GM12878 (cell line): ENCODE measurements at regions of chr2 and their contacts with region 1.

Region 1: DNA sequence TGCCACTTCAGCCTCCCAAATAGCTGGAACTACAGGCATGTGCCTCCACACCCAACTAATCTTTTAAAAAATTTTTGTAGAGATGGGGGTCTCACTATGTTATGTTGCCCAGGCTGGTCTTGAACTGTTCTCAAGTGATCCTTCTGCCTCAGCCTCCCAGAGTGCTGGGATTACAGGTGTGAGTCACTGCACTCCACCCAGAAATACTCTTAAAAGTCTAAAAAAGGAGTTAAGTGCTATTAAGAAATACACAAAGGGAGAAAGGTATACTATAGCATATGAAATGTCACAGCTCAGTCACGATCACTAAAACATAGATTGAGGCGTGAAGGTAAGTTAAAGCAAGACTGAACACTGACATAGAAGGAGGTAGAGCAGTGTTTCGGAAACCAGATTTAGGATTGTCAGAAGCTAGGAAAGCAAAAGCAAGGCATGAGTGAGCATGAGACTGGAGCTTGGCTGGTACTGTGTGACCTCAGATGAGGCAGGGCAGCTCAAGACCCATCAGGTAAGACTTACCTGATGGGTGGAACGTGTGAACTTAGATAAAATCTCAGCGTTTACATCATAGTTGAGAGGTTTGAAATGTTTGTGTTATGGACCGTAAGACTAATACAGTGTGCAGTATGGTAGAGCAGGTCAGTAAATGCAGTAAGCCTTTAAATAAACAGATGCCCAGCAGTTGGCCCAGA is 9.2 kb downstream of the CCNYL1 start:
- DNase-seq: no peak
- ATAC-seq: peak; percentile 4; the same call in 2 of the 3 replicates
- H3K4me3 ChIP-seq: no peak overlapping the region
- H3K27ac ChIP-seq: no peak overlapping the region
- H3K4me1 ChIP-seq: peaks cover 3% of the 10 kb centered on the region; the same call in 1 of the 2 replicates
- H3K27me3 ChIP-seq: no peaks in the 10 kb centered on the region
- CTCF ChIP-seq: no peak
- EP300 ChIP-seq: no peak
- POLR2A ChIP-seq: no peak
- RAD21 ChIP-seq: no peak

Region 2: DNA sequence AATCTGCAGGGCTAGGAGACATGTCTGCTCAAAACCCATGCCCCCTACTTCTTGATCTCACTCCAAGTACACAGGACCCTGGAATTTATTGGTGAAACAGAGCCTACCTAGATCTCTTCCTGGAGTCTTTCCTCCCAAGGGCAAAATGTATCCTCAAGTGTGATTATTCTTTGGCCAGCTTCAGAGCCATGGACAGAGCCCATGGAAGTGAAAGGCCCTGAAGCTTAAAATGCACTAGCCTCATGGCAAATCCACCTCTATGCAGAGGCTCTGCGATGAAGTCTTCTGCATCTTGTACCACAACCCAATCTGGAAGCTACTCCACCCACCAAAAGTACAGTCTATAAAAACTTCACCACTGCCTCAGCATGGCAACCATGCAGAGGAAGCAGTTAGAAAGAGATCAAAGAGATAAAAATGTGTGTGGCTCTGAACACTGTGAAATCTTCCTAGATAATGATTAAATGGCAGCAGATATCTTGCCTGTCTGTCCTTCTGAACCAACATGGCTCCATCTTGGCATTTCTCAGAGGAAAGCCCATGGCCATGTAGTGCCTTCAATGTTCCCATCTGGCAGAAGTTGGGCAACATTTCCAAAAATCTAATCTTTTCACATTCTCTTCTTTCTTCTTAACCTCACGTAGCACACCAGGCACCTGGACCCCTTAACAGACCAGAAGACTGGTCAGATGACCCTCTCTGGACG is 412.0 kb before region 1 on chr2:
- CTCF ChIA-PET with region 1: no interaction called
- POLR2A ChIA-PET with region 1: no interaction called
- RAD21 ChIA-PET with region 1: no interaction called
- SMC1A ChIA-PET with region 1: no interaction called
- in situ Hi-C with region 1: no loop called
- intact Hi-C with region 1: no loop called
- DNase-seq: no peak
- ATAC-seq: no peak
- H3K4me3 ChIP-seq: no peak overlapping the region
- H3K27ac ChIP-seq: no peak overlapping the region
- H3K4me1 ChIP-seq: no peaks in the 10 kb centered on the region
- H3K27me3 ChIP-seq: no peaks in the 10 kb centered on the region
- CTCF ChIP-seq: no peak
- EP300 ChIP-seq: no peak
- POLR2A ChIP-seq: no peak
- RAD21 ChIP-seq: no peak

Region 3: GRCh38 chr2:207632575-207633493 is 87.8 kb before region 1 on chr2:
- CTCF ChIA-PET with region 1: interaction called, 49 read pairs
- POLR2A ChIA-PET with region 1: interaction called, 8 read pairs
- RAD21 ChIA-PET with region 1: interaction called, 31 read pairs
- SMC1A ChIA-PET with region 1: interaction called, 23 read pairs
- in situ Hi-C with region 1: no loop called
- intact Hi-C with region 1: loop called (anchors 5 kb)
- DNase-seq: no peak
- ATAC-seq: peak; percentile 86
- H3K4me3 ChIP-seq: no peak overlapping the region
- H3K27ac ChIP-seq: no peak overlapping the region
- H3K4me1 ChIP-seq: no peaks in the 10 kb centered on the region
- H3K27me3 ChIP-seq: no peaks in the 10 kb centered on the region
- CTCF ChIP-seq: no peak
- EP300 ChIP-seq: no peak
- POLR2A ChIP-seq: no peak
- RAD21 ChIP-seq: no peak

Region 4: GRCh38 chr2:207643892-207644291 is 76.8 kb before region 1 on chr2:
- CTCF ChIA-PET with region 1: no interaction called
- POLR2A ChIA-PET with region 1: no interaction called
- RAD21 ChIA-PET with region 1: no interaction called
- SMC1A ChIA-PET with region 1: no interaction called
- in situ Hi-C with region 1: no loop called
- intact Hi-C with region 1: no loop called
- DNase-seq: no peak
- ATAC-seq: no peak
- H3K4me3 ChIP-seq: no peak overlapping the region
- H3K27ac ChIP-seq: no peak overlapping the region
- H3K4me1 ChIP-seq: no peaks in the 10 kb centered on the region
- H3K27me3 ChIP-seq: no peaks in the 10 kb centered on the region
- CTCF ChIP-seq: no peak
- EP300 ChIP-seq: no peak
- POLR2A ChIP-seq: no peak
- RAD21 ChIP-seq: no peak